ENCODE measurements at regions of chr6 and their contacts with region 1.

Region 1: GRCh38 chr6:134822920-134823709 is 126.8 kb downstream of the ALDH8A1 start:
- DNase-seq: peak; percentile 18 to 26
- ATAC-seq: peak; percentile 62 to 70
- H3K4me3 ChIP-seq: no peak overlapping the region
- H3K27ac ChIP-seq: no peak overlapping the region
- H3K4me1 ChIP-seq: peaks cover 13 to 18% of the 10 kb centered on the region in 2 donors
- H3K27me3 ChIP-seq: no peaks in the 10 kb centered on the region
- CTCF ChIP-seq: peak; percentile 84 to 95 (median 89)
- POLR2A ChIP-seq: no peak

Region 2: GRCh38 chr6:134161036-134161435 is 662.1 kb before region 1 on chr6:
- in situ Hi-C with region 1: loop called in 3 of 4 experiments (anchors 10 kb)
- intact Hi-C with region 1: loop called (anchors 1 kb)
- DNase-seq: no peak
- ATAC-seq: no peak
- H3K4me3 ChIP-seq: no peak overlapping the region
- H3K27ac ChIP-seq: no peak overlapping the region
- H3K4me1 ChIP-seq: peaks cover 0 to 8% of the 10 kb centered on the region in 2 donors
- H3K27me3 ChIP-seq: no peaks in the 10 kb centered on the region
- CTCF ChIP-seq: no peak
- POLR2A ChIP-seq: no peak

Region 3: GRCh38 chr6:134640975-134641429 is 182.1 kb before region 1 on chr6:
- in situ Hi-C with region 1: loop called in 3 of 4 experiments (anchors 5 to 25 kb)
- intact Hi-C with region 1: loop called (anchors 1 kb)
- DNase-seq: peak; percentile 68 to 84
- ATAC-seq: peak; percentile 90 to 97
- H3K4me3 ChIP-seq: no peak overlapping the region
- H3K27ac ChIP-seq: peak overlapping the region in 3 of 4 donors; percentile 3 to 57 (median 21)
- H3K4me1 ChIP-seq: peaks cover 7 to 12% of the 10 kb centered on the region in 2 donors
- H3K27me3 ChIP-seq: no peaks in the 10 kb centered on the region
- CTCF ChIP-seq: peak; percentile 92 to 98 (median 95)
- POLR2A ChIP-seq: no peak

Region 4: DNA sequence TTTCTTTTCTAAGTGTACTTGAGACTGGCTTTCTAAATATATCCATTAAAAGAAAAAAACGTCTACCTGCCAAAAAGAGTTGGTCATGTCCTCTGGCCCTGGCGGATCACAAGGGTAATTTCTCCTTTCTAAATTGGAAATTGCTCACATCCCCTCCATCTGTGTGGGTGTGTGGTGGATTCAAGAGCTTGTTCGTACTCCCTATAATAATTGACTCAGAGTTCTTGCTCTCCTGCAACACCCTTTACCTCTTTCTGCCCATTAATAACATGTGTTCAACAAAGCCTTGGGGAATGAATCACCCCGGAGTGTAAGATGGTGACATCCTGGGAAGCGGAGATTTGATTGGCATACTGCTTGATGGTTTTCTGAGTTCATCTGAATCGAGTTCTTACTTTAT is 137.0 kb before region 1 on chr6:
- in situ Hi-C with region 1: no loop called
- intact Hi-C with region 1: loop called (anchors 10 kb)
- DNase-seq: no peak
- ATAC-seq: no peak
- H3K4me3 ChIP-seq: no peak overlapping the region
- H3K27ac ChIP-seq: no peak overlapping the region
- H3K4me1 ChIP-seq: peaks cover 4 to 14% of the 10 kb centered on the region in 2 donors
- H3K27me3 ChIP-seq: no peaks in the 10 kb centered on the region
- CTCF ChIP-seq: no peak
- POLR2A ChIP-seq: no peak

Region 5: DNA sequence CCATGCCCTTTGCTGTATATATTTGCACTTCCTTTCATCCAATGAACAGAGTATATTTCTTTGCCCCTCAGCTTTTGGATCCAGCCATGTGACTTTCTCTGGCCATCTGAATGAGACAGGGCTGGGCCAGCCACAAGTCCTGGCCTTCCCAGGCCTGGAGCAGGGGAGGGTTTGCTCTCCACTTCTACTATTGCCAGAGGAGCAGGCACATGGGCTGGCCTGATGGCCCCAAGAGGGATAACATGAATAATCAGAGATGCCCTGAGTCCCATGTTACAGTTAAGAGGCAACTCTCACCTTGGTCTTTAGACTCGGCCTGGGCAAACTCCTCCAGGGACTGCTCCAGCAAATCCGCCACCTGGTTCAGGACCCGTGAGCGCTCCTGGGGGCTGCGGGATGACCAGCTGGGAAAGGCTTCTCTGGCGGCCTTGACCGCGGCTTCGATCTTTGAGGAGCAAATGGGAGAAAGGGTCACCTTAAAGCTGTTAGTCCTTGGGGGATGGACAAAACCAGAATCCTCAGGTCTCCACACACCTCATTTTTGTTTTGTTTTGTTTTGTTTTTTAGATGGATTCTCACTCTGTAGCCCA is 120.5 kb after region 1 on chr6:
- in situ Hi-C with region 1: no loop called
- intact Hi-C with region 1: loop called (anchors 5 kb)
- DNase-seq: no peak
- ATAC-seq: no peak
- H3K4me3 ChIP-seq: no peak overlapping the region
- H3K27ac ChIP-seq: no peak overlapping the region
- H3K4me1 ChIP-seq: no peaks in the 10 kb centered on the region
- H3K27me3 ChIP-seq: no peaks in the 10 kb centered on the region
- CTCF ChIP-seq: no peak
- POLR2A ChIP-seq: no peak